ENCODE measurements at regions of chr1 and their contacts with region 1.

Region 1: DNA sequence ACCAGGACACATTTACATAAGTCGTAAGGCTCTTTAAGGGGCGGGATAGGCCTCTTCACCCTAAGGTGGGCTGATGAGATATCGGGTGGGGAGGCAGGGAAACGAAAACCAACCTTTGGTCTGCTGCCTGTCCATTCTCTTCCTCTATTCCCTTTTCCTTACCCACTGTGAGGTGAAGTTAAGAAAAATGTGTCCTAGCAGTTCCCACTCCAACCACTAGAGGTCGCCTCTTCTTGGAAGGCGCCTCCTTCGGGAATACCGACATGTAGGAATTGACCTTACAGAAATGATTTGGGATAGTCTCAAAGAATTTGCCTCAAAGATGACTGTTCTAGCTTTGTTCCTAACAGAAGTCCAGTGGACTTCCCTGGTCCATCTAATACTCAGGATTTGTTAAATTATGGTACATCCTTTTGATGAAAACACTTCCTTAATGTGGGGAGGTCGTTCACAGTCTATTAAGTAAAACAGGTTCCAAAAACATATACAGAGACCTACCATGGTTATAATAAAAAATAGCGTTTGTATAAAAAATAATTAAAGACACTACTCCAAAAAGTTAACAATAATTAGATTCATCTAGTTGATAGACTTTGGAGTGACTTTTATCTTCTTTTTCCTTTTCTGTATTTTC is 14.1 kb downstream of the AZIN2 start:
- DNase-seq: peak; percentile 44
- ATAC-seq: no peak
- H3K4me3 Mint-ChIP-seq: no peak overlapping the region
- H3K27ac Mint-ChIP-seq: no peak overlapping the region
- H3K4me1 Mint-ChIP-seq: peaks cover 27% of the 10 kb centered on the region
- H3K27me3 Mint-ChIP-seq: no peaks in the 10 kb centered on the region

Region 2: GRCh38 chr1:33072707-33073106 is 22.4 kb before region 1 on chr1:
- CTCF ChIA-PET with region 1: no interaction called
- POLR2A ChIA-PET with region 1: no interaction called
- intact Hi-C with region 1: no loop called
- DNase-seq: no peak
- ATAC-seq: no peak
- H3K4me3 Mint-ChIP-seq: no peak overlapping the region
- H3K27ac Mint-ChIP-seq: no peak overlapping the region
- H3K4me1 Mint-ChIP-seq: no peaks in the 10 kb centered on the region
- H3K27me3 Mint-ChIP-seq: peaks cover 2% of the 10 kb centered on the region

Region 3: GRCh38 chr1:33610864-33611455 is 515.9 kb after region 1 on chr1:
- CTCF ChIA-PET with region 1: no interaction called
- POLR2A ChIA-PET with region 1: no interaction called
- intact Hi-C with region 1: loop called in 1 of 2 experiments (anchors 5 kb)
- DNase-seq: no peak
- ATAC-seq: no peak
- H3K4me3 Mint-ChIP-seq: no peak overlapping the region
- H3K27ac Mint-ChIP-seq: no peak overlapping the region
- H3K4me1 Mint-ChIP-seq: peaks cover 3% of the 10 kb centered on the region
- H3K27me3 Mint-ChIP-seq: peaks cover 19% of the 10 kb centered on the region